Left ventricle myocardium superior (tissue), 1 donor: ENCODE measurements at regions of chr19 and their contacts with region 1.

Region 1: DNA sequence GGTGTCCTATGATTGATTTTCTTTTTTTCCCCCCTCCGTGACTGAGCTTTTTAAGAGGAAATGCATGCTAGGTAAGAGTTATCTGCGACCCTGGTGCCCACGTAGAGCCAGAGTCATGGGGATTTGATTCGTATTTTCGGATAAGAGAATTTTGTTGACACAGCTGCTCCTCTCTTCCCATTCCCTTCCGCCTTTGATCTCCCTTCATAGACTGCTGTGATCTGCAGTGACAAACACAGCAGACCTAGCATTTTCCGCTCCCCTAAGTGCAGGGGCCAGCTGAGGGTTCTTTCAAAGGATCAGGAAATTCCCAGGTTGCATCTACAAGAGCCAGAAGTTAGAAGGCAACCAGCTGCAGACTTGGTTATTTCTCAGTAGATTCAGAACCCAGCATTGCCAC is 70.5 kb downstream of the ZNF568 start:
- DNase-seq: no peak
- ATAC-seq: no peak

Region 2: DNA sequence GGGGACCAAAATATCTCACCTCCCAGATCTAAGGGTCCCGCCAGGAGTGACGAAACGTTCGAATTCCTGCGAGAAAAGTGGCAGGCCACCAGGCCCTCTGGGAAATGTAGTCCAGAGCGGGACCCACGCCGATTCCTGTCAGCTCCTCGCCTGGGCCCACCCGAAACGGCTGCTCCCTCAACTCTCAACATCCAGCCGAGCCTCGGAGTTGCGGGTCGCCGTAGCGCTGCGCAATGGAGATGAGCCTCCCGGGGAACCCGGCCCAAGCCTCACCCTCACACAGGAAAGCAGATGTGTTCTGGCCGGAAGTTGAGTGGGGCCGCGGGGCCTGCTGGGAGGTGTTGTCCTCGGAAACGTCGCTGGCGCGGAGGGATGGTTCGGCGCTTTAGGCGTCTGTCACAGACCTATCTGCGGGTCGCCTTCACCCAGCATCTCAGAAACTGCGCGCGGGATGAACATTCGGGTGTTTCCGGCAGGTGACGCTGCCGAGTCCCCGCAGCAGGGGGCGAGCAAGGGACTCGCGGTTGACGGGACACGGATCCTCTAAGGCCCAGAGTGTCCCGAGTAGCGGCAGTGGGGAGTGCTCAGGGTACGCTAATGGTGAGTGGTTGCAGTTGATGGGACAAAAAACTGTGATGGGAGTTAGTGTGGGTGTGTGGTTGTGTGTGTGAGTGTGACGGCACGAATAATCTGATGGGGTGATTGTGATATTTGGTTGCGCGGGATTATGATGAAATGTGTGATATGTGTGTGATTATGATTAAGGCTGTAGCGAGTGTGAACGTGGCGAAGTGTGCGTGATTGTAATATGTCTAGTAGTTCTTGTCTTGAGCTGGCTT is 70.4 kb before region 1 on chr19 and contains the starts of genes ZNF568 and ZNF829:
- intact Hi-C with region 1: no loop called
- DNase-seq: peak; percentile 93
- ATAC-seq: peak; percentile 99
- total RNA-seq, gene ZNF568: 7.4 TPM
- total RNA-seq, gene ZNF829: 2.8 TPM

Region 3: DNA sequence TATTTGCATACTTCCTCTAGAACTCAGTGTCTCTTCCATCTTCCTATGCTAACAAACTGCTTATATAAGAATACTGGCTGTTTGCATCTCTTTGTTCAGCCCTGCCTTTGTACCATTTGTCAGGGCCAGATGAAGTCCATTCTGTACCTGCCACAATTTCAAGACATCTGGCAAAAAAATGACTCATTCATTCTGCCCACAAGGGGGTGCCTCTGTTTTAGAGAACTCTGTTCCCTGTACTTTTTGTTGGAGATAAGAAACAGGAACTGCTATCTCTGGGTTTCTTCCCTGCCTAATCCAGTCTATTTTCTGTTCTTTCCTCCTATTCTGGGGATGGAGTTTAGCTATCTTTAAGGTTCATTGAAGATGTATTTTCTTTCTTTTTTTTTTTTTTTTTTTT is 47.4 kb before region 1 on chr19:
- intact Hi-C with region 1: no loop called
- DNase-seq: no peak
- ATAC-seq: no peak

Region 4: GRCh38 chr19:37572203-37572602 is 585.6 kb after region 1 on chr19:
- intact Hi-C with region 1: loop called (anchors 5 kb)
- DNase-seq: no peak
- ATAC-seq: no peak